ENCODE measurements at regions of chr13 and their contacts with region 1.

Region 1: GRCh38 chr13:48126944-48127830 is 32.3 kb upstream of the MED4 start:
- DNase-seq: peak; percentile 26
- H3K4me3 Mint-ChIP-seq: peak overlapping the region; percentile 10
- H3K27ac Mint-ChIP-seq: no peak overlapping the region
- H3K4me1 Mint-ChIP-seq: peaks cover 22% of the 10 kb centered on the region
- H3K27me3 Mint-ChIP-seq: peaks cover 3% of the 10 kb centered on the region

Region 2: GRCh38 chr13:48078251-48078656 is 48.9 kb before region 1 on chr13:
- CTCF ChIA-PET with region 1: no interaction called
- POLR2A ChIA-PET with region 1: no interaction called
- intact Hi-C with region 1: no loop called
- DNase-seq: peak; percentile 33
- H3K4me3 Mint-ChIP-seq: no peak overlapping the region
- H3K27ac Mint-ChIP-seq: no peak overlapping the region
- H3K4me1 Mint-ChIP-seq: peaks cover 3% of the 10 kb centered on the region
- H3K27me3 Mint-ChIP-seq: no peaks in the 10 kb centered on the region

Region 3: GRCh38 chr13:48303359-48304142 is 176.4 kb after region 1 on chr13 and contains the start of gene RB1:
- CTCF ChIA-PET with region 1: interaction called, 4 read pairs
- POLR2A ChIA-PET with region 1: no interaction called
- intact Hi-C with region 1: loop called (anchors 1 kb)
- DNase-seq: peak; percentile 94
- H3K4me3 Mint-ChIP-seq: peak within 1 kb of the TSS; percentile 97
- H3K27ac Mint-ChIP-seq: peak within 1 kb of the TSS; percentile 93
- H3K4me1 Mint-ChIP-seq: peaks cover 27% of the 10 kb centered on the region
- H3K27me3 Mint-ChIP-seq: no peaks in the 10 kb centered on the region
- total RNA-seq, gene RB1: 26.5 to 28.8 TPM

Region 4: DNA sequence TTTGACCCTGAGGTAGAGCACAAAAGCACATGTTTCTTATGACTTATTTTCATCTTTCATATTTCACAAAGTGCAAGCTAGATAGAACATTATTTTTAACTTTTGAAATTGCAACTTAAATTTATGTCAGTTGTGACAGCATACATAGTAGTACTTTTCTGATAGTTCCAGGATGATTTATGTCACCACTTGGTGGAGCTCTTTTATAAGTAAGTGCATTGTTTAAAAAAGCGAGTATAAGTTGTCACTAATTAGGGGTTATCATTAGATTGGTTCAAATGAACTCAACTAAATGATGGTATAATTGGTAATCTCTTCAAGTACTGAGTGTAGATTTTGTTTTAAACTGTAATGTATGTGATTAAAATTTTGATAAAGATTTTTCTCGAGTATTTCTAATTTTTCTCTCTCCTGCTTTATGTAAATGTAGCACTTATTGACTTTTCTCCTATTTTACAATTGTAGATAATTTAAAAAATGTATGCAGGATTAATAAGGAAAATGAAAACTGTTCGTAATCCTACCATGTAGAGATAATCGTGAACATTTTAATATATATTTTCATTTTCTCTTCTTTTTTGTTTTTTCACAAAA is 207.4 kb after region 1 on chr13:
- CTCF ChIA-PET with region 1: interaction called, 15 read pairs
- POLR2A ChIA-PET with region 1: no interaction called
- intact Hi-C with region 1: no loop called
- DNase-seq: no peak
- H3K4me3 Mint-ChIP-seq: no peak overlapping the region
- H3K27ac Mint-ChIP-seq: no peak overlapping the region
- H3K4me1 Mint-ChIP-seq: peaks cover 5% of the 10 kb centered on the region
- H3K27me3 Mint-ChIP-seq: no peaks in the 10 kb centered on the region

Region 5: DNA sequence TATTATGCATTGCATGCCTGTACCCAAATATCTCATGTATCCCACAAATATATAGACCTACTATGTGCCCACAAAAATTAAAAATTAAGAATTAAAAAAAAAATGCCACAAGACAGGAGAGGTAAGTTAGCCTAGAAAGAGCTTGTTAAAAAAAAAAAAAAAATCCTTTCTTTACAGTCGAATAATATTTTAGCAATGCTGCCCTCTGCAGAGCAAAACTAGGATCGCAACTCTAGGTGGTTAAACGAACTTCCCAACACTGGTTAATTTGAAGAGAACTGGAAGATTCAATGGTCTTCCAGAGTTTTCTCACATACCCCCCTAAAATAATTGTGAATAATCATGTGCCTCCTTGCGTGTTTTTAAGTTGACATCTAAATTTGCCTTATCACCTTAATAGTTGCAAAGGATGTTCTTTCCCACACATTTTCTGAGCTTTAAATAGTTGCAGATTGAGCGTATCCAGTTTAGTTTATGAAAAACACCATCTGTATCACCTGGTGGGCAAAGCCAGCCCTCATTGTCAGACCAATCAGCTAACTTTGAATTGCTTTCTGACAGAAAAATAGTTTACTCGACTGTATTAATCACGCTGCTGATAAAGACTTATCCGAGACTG is 453.1 kb after region 1 on chr13:
- CTCF ChIA-PET with region 1: interaction called, 47 read pairs
- POLR2A ChIA-PET with region 1: no interaction called
- intact Hi-C with region 1: loop called (anchors 1 kb)
- DNase-seq: peak; percentile 75
- H3K4me3 Mint-ChIP-seq: no peak overlapping the region
- H3K27ac Mint-ChIP-seq: no peak overlapping the region
- H3K4me1 Mint-ChIP-seq: peaks cover 4% of the 10 kb centered on the region
- H3K27me3 Mint-ChIP-seq: peaks cover 7% of the 10 kb centered on the region

Measured in activated CD4-positive, alpha-beta memory T cell treated with anti-CD3 and anti-CD28 coated beads for 36 hours (primary cell).